T-cell (primary cell): ENCODE measurements at regions of chr12 and their contacts with region 1.

Region 1: GRCh38 chr12:12696562-12697383 is 790 bp upstream of the GPR19 start:
- DNase-seq: peak; percentile 88 to 95 (median 92)
- ATAC-seq: peak; percentile 88 to 92 (median 90)
- H3K4me3 ChIP-seq: peak overlapping the region; percentile 57 to 66
- H3K4me3 Mint-ChIP-seq: peak overlapping the region; percentile 87 to 93 (median 93)
- H3K27ac ChIP-seq: peak overlapping the region; percentile 98
- H3K27ac Mint-ChIP-seq: peak overlapping the region; percentile 99 to 100
- H3K4me1 ChIP-seq: peaks cover 9 to 10% of the 10 kb centered on the region in 2 experiments
- H3K4me1 Mint-ChIP-seq: peaks cover 31 to 37% (median 32%) of the 10 kb centered on the region in 3 donors
- H3K27me3 ChIP-seq: no peaks in the 10 kb centered on the region
- H3K27me3 Mint-ChIP-seq: no peaks in the 10 kb centered on the region

Region 2: DNA sequence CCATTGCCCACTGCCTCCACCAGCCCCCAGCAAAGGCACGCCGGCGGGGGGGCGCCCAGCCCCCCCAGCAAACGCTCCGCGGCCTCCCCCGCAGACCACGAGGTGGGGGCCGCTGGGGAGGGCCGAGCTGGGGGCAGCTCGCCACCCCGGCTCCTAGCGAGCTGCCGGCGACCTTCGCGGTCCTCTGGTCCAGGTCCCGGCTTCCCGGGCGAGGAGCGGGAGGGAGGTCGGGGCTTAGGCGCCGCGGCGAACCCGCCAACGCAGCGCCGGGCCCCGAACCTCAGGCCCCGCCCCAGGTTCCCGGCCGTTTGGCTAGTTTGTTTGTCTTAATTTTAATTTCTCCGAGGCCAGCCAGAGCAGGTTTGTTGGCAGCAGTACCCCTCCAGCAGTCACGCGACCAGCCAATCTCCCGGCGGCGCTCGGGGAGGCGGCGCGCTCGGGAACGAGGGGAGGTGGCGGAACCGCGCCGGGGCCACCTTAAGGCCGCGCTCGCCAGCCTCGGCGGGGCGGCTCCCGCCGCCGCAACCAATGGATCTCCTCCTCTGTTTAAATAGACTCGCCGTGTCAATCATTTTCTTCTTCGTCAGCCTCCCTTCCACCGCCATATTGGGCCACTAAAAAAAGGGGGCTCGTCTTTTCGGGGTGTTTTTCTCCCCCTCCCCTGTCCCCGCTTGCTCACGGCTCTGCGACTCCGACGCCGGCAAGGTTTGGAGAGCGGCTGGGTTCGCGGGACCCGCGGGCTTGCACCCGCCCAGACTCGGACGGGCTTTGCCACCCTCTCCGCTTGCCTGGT is 20.2 kb after region 1 on chr12 and contains the start of gene CDKN1B:
- CTCF ChIA-PET with region 1: interaction called in 1 of 2 experiments, 8 read pairs
- POLR2A ChIA-PET with region 1: interaction called, 6 to 22 read pairs
- DNase-seq: peak; percentile 78 to 93 (median 87)
- ATAC-seq: peak; percentile 72 to 77 (median 73)
- H3K4me3 ChIP-seq: peak within 1 kb of the TSS; percentile 94 to 100
- H3K4me3 Mint-ChIP-seq: peak within 1 kb of the TSS; percentile 93 to 99 (median 99)
- H3K27ac ChIP-seq: peak within 1 kb of the TSS; percentile 97
- H3K27ac Mint-ChIP-seq: peak within 1 kb of the TSS; percentile 99 to 100
- H3K4me1 ChIP-seq: peaks cover 38 to 39% of the 10 kb centered on the region in 2 experiments
- H3K4me1 Mint-ChIP-seq: peaks cover 43 to 69% (median 58%) of the 10 kb centered on the region in 3 donors
- H3K27me3 ChIP-seq: no peaks in the 10 kb centered on the region
- H3K27me3 Mint-ChIP-seq: no peaks in the 10 kb centered on the region
- total RNA-seq, gene CDKN1B: 170 to 246 (median 188) TPM

Region 3: DNA sequence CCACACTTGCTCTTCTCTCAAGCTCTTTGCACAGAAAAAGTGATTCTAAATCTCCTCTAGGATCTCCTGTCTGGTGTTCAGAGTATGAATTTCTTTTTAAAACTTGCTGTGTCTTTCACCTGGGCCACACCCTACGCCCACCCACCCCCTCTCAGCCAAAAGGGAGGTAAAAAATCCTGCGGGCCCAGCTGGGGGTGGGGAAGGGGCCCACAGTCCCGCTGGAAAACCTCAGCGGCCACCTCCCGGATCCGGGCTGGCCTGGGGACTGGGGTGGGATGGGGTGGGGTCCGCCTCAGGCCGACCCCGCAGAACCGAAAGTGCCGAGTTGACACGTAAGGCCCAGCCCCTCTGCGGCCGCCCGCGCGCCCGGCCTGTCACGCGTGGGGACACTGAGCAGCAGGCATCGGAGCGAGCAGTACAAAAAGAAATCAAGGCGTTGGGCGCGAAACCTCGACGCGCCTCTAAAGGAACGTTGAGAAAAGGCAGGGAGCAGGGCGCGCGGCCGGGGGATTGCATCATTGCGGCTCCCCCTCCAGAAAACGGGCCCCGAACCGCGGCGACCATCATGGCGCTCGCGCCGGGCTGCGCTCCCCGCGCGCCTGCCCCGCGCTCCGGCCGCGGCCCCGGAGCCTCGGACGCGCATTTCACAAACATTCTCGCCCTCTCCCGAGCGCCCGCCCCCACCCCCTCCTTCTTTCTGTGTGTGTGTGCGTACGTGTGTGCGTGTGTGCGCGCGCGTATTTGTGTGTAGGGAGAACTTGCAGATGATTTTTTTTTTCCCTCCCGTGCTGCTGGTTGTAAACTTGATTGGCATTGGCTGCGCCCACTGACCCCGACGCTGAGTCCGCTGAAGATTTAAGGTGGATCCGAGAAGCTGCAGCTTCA is 28.1 kb after region 1 on chr12:
- CTCF ChIA-PET with region 1: interaction called in 1 of 2 experiments, 3 read pairs
- POLR2A ChIA-PET with region 1: interaction called, 5 to 16 read pairs
- DNase-seq: peak in 34 of 35 experiments; percentile 79 to 96 (median 88)
- ATAC-seq: peak; percentile 59 to 69 (median 62)
- H3K4me3 ChIP-seq: peak overlapping the region; percentile 65 to 81
- H3K4me3 Mint-ChIP-seq: peak overlapping the region; percentile 87 to 100 (median 99)
- H3K27ac ChIP-seq: peak overlapping the region; percentile 97
- H3K27ac Mint-ChIP-seq: peak overlapping the region; percentile 98 to 99
- H3K4me1 ChIP-seq: peaks cover 39% of the 10 kb centered on the region in 2 experiments
- H3K4me1 Mint-ChIP-seq: peaks cover 51 to 62% (median 58%) of the 10 kb centered on the region in 3 donors
- H3K27me3 ChIP-seq: no peaks in the 10 kb centered on the region
- H3K27me3 Mint-ChIP-seq: no peaks in the 10 kb centered on the region